ENCODE measurements at regions of chr20 and their contacts with region 1.

Region 1: DNA sequence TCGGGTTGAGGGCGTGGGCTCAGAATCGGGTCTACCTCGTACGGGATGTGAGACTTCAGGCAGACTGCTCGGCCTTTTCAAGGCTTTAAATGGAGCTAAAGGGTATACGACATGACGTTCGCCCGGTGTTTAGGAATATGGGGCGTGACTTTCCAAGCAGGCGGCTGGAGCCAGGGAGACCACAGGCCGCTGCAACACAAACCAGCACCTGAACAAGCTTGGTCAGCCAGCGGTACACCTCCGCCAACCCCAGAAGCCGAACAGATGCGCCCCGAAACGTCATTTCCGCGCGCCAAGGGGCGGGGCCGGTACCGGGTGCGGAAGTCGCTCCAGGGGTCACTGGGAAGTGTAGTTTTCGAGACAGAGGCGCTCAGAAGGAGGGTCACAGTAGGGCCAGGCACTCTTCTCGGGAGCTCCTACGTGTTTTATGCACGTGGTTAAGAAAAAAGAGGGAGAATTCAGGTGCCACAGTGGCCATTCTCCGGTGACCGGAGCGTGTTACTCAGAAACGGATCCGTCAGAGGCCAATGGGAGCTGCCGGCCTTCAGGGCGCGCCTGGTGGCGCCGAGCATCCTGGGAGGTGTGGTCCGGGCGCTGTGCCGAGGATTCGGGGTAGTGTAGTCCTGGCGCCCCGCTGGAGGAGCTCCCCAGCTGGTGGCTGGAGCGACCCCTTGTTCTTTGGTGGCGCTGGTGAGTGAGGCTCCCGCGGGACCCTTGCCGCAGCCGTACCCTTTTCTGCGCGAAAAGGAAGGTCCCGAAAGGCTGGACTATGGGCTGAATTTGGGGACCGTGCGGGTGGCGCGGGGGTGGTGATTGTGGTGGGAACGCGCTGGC is at the start of gene ZNF133:
- DNase-seq: peak; percentile 97
- H3K4me3 Mint-ChIP-seq: peak within 1 kb of the TSS; percentile 95
- H3K27ac Mint-ChIP-seq: peak within 1 kb of the TSS; percentile 98
- H3K4me1 Mint-ChIP-seq: peaks cover 12% of the 10 kb centered on the region
- H3K27me3 Mint-ChIP-seq: peaks cover 12% of the 10 kb centered on the region
- total RNA-seq, gene ZNF133: 5.2 to 5.3 TPM

Region 2: DNA sequence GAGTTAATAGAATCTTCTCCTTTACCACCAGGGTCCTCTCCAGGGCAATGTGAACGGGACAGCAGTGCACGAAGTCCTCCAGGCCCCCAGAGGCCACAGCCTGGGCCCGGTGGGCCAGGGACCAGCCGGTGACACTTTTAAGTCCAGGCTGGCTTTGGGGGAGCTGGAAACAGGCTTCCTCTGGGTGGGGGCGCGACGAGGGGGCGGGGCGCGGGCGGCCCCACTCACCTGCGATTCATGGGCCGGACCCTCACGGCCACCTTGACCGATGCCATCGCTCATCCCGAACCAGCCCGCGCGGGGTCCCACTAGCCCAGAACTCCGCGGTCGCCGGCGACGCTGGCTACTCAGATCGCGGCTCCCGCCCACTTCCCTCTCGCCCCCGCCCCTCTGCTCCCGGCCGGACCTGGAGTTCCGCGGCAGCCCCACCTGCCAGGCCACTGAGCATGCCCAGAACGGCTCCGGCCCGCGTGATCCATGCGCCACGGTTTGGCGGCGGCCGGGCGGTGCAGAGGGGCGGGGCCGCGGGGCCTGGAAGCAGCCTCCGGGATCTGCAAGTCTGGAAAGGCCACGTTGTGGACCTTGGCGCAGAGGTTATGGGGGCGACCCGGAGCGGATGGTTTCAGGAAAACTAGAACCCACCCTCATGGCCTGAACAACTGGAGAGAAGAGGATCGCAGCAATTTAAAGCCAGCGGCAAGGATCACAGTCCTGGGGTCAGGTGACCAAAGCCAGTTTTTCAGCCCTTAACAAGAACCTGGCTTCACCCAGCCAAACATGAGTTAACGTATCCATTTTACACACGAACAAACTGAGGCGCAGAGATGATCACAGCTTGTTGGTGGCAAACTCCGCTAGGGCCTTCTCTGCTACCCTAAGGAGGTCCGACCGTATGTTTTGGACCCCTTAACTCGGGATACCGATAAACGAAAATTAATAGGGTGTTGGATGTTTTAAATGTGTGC is 1714.8 kb before region 1 on chr20 and contains the start of gene KIF16B:
- CTCF ChIA-PET with region 1: no interaction called
- intact Hi-C with region 1: loop called (anchors 10 kb)
- DNase-seq: peak; percentile 89
- H3K4me3 Mint-ChIP-seq: peak within 1 kb of the TSS; percentile 88
- H3K27ac Mint-ChIP-seq: peak within 1 kb of the TSS; percentile 79
- H3K4me1 Mint-ChIP-seq: peaks cover 35% of the 10 kb centered on the region
- H3K27me3 Mint-ChIP-seq: no peaks in the 10 kb centered on the region
- total RNA-seq, gene KIF16B: 5.1 to 5.6 TPM

Region 3: GRCh38 chr20:18137412-18138265 is 150.5 kb before region 1 on chr20 and contains the starts of genes KAT14 and PET117:
- CTCF ChIA-PET with region 1: no interaction called
- intact Hi-C with region 1: loop called (anchors 1 kb)
- DNase-seq: peak; percentile 91
- H3K4me3 Mint-ChIP-seq: peak within 1 kb of the TSS; percentile 75
- H3K27ac Mint-ChIP-seq: peak within 1 kb of the TSS; percentile 77
- H3K4me1 Mint-ChIP-seq: peaks cover 30% of the 10 kb centered on the region
- H3K27me3 Mint-ChIP-seq: no peaks in the 10 kb centered on the region
- total RNA-seq, gene KAT14: 10.3 to 12.9 TPM
- total RNA-seq, gene PET117: 16.7 to 17.9 TPM

Region 4: GRCh38 chr20:18466894-18467730 is 179.0 kb after region 1 on chr20 and contains the starts of genes DZANK1 and POLR3F:
- CTCF ChIA-PET with region 1: no interaction called
- intact Hi-C with region 1: loop called (anchors 1 kb)
- DNase-seq: peak; percentile 94
- H3K4me3 Mint-ChIP-seq: peak within 1 kb of the TSS; percentile 92
- H3K27ac Mint-ChIP-seq: peak within 1 kb of the TSS; percentile 84
- H3K4me1 Mint-ChIP-seq: peaks cover 32% of the 10 kb centered on the region
- H3K27me3 Mint-ChIP-seq: no peaks in the 10 kb centered on the region
- total RNA-seq, gene DZANK1: 0.79 to 0.94 TPM
- total RNA-seq, gene POLR3F: 7.0 to 8.3 TPM

Region 5: GRCh38 chr20:18507218-18508021 is 219.3 kb after region 1 on chr20 and contains the start of gene SEC23B:
- CTCF ChIA-PET with region 1: no interaction called
- intact Hi-C with region 1: loop called (anchors 1 kb)
- DNase-seq: peak; percentile 99
- H3K4me3 Mint-ChIP-seq: peak within 1 kb of the TSS; percentile 100
- H3K27ac Mint-ChIP-seq: peak within 1 kb of the TSS; percentile 100
- H3K4me1 Mint-ChIP-seq: peaks cover 45% of the 10 kb centered on the region
- H3K27me3 Mint-ChIP-seq: no peaks in the 10 kb centered on the region
- total RNA-seq, gene SEC23B: 66.9 to 69.2 TPM

Region 6: GRCh38 chr20:18587665-18588573 is 299.8 kb after region 1 on chr20 and contains the start of gene DTD1:
- CTCF ChIA-PET with region 1: no interaction called
- intact Hi-C with region 1: loop called (anchors 5 kb)
- DNase-seq: peak; percentile 89
- H3K4me3 Mint-ChIP-seq: peak within 1 kb of the TSS; percentile 87
- H3K27ac Mint-ChIP-seq: peak within 1 kb of the TSS; percentile 59
- H3K4me1 Mint-ChIP-seq: peaks cover 23% of the 10 kb centered on the region
- H3K27me3 Mint-ChIP-seq: no peaks in the 10 kb centered on the region
- total RNA-seq, gene DTD1: 46.4 to 47.1 TPM